ENCODE measurements at regions of chr9 and their contacts with region 1.

Region 1: GRCh38 chr9:78439190-78439865 is 142.4 kb downstream of the PSAT1 start:
- DNase-seq: peak; percentile 81
- H3K4me3 ChIP-seq: peak overlapping the region; percentile 52
- H3K27ac ChIP-seq: no peak overlapping the region
- H3K27me3 ChIP-seq: peaks cover 10% of the 10 kb centered on the region
- CTCF ChIP-seq: peak; percentile 96

Region 2: DNA sequence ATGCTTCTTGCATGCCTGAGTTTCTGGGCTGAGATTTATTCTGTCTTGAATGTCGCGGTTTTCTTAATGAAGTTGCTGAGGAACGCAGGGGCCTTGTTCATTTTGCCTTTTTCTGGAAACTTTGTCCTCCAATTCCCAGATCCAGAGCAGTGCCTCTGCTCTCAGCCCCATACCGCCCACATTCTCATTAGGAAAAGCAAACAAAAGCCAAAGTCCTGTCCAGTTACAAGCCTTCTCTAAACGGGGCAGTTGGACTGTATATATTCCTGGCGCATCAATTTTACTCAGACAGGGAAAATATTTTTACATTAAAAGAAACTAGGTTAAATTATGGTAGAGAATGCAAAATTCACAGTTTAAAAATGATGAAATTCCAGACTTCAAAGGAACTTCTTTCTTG is 143.6 kb before region 1 on chr9:
- CTCF ChIA-PET with region 1: no interaction called
- POLR2A ChIA-PET with region 1: no interaction called
- DNase-seq: no peak
- H3K4me3 ChIP-seq: peak overlapping the region; percentile 99
- H3K27ac ChIP-seq: peak overlapping the region; percentile 97
- H3K27me3 ChIP-seq: no peaks in the 10 kb centered on the region
- CTCF ChIP-seq: no peak

Region 3: DNA sequence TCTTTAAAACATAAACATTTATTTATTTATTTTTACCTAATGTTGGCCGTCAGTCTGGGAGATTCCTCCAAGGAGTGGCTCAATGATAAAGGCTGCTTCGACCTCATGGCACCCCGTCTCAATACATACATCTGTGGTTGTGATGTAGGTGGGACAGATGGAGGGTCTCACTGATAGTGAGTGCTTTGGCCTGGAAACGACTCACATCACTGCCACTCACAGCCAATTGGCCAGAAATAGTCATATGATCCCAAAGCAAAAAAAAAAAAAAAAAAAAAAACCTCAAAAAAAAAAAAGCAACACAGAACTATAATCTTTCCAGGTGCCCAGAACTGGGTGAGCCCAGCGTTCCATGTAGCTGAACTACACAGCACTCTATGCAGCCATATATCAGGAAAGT is 17.0 kb before region 1 on chr9:
- CTCF ChIA-PET with region 1: interaction called, 11 read pairs
- POLR2A ChIA-PET with region 1: no interaction called
- DNase-seq: no peak
- H3K4me3 ChIP-seq: no peak overlapping the region
- H3K27ac ChIP-seq: no peak overlapping the region
- H3K27me3 ChIP-seq: peaks cover 2% of the 10 kb centered on the region
- CTCF ChIP-seq: no peak

Region 4: DNA sequence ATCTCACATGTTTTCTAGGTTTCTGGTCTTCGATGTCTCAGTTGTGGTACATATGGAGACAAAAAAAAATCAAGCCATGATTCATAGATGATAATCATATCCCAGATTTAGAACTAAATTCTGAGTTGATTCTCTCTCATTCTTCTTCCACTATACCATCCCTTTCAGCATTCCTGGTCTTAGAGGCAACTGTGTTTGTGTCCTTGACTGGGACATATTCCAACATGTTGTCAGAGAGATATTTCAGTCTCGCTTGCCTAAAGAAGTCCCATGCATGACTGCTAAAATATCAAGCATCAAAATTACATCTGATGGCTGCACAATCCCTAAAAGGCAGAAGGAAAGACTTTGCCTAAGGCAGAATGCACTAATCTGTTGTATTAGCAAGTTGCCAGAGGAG is 94.2 kb after region 1 on chr9:
- CTCF ChIA-PET with region 1: no interaction called
- POLR2A ChIA-PET with region 1: no interaction called
- DNase-seq: no peak
- H3K4me3 ChIP-seq: no peak overlapping the region
- H3K27ac ChIP-seq: no peak overlapping the region
- H3K27me3 ChIP-seq: no peaks in the 10 kb centered on the region
- CTCF ChIP-seq: no peak

Region 5: DNA sequence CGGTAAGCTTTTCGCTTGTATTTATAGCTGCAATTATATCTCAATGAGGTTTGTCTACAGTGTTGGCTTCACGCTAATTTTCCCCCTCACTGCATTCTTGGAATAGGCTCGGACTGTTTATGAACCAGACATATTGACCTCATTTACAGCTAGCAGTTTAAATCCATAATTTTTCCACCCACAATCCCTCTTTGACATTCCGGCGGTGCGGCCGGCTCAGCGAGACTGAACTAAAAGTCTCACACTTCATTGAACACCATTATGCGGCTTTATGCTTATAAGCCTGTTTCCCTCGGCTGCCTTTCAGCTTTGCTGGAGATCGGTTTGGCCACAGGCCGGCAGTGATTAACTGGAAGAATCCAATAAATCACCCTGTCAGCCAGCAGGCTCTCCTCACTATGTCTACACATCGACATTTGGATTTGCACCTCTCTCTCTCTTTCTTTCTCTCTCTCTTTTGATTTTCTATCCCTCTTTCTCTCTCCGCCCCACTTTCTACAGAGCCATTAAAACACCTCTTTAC is 817.4 kb after region 1 on chr9:
- CTCF ChIA-PET with region 1: interaction called, 12 read pairs
- POLR2A ChIA-PET with region 1: no interaction called
- DNase-seq: no peak
- H3K4me3 ChIP-seq: no peak overlapping the region
- H3K27ac ChIP-seq: no peak overlapping the region
- H3K27me3 ChIP-seq: no peaks in the 10 kb centered on the region
- CTCF ChIP-seq: no peak